ENCODE measurements at regions of chr15 and their contacts with region 1.

Region 1: GRCh38 chr15:85646538-85647091 is 148.1 kb downstream of the KLHL25 start:
- DNase-seq: no peak
- H3K4me3 ChIP-seq: no peak overlapping the region
- H3K27ac ChIP-seq: no peak overlapping the region
- H3K4me1 ChIP-seq: no peaks in the 10 kb centered on the region
- H3K27me3 ChIP-seq: no peaks in the 10 kb centered on the region
- CTCF ChIP-seq: no peak

Region 2: DNA sequence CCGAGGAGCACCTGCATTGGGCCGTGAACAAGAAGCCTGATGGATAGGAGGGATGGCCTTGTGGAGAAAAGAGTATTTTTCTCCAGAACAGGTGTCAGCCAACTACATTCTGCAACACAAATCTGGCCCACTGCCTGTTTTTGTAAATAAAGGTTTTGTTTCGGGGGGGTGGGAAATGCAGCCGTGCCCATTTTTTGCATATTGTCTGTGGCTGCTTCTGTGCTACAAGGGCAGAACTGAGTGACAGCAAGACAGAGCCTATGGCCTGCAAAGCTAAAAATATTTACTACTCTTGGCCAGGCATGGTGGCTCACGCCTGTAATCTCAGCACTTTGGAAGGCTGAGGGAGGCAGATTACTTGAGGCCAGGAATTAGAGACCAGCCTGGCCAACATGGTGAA is 362.1 kb before region 1 on chr15:
- CTCF ChIA-PET with region 1: no interaction called
- POLR2A ChIA-PET with region 1: interaction called, 21 read pairs
- intact Hi-C with region 1: no loop called
- DNase-seq: no peak
- H3K4me3 ChIP-seq: no peak overlapping the region
- H3K27ac ChIP-seq: no peak overlapping the region
- H3K4me1 ChIP-seq: no peaks in the 10 kb centered on the region
- H3K27me3 ChIP-seq: no peaks in the 10 kb centered on the region
- CTCF ChIP-seq: no peak

Region 3: DNA sequence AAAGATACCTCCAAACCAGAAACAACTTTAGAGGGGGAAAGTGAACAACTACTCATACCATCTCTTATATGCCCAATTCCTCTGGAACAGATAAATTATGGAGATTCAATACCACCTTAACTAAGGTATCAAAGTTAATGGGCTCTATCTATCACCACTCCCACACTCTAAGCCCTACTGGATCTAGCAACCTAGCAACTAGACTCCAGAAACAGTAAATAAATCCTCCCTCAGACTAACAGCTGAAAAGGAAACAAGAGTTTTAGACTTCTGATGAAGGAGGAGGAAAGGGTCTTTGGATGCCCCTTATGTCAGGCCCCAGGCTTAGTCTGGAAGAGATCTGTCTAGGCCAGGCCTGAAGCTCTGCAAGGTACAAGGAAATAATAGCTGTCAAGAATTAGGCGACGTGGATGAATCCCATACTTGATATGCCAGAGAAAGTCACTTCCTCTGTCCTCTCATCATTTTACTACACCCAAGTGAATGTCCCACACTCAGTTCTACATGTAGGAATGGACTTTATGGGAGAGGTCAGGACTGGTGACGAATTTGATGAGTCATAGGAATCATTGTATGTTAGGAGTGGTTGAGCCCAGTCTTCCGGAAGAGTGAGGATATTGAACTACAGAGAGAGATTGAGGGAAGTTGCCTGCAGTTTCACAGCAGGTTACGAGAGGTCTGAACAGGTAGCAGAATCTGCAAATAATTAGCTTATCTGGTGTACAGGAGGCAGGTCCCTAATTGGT is 152.4 kb before region 1 on chr15:
- CTCF ChIA-PET with region 1: no interaction called
- POLR2A ChIA-PET with region 1: no interaction called
- intact Hi-C with region 1: no loop called
- DNase-seq: peak; percentile 40 to 95
- H3K4me3 ChIP-seq: no peak overlapping the region
- H3K27ac ChIP-seq: peak overlapping the region; percentile 84
- H3K4me1 ChIP-seq: peaks cover 30% of the 10 kb centered on the region
- H3K27me3 ChIP-seq: no peaks in the 10 kb centered on the region
- CTCF ChIP-seq: no peak

Region 4: DNA sequence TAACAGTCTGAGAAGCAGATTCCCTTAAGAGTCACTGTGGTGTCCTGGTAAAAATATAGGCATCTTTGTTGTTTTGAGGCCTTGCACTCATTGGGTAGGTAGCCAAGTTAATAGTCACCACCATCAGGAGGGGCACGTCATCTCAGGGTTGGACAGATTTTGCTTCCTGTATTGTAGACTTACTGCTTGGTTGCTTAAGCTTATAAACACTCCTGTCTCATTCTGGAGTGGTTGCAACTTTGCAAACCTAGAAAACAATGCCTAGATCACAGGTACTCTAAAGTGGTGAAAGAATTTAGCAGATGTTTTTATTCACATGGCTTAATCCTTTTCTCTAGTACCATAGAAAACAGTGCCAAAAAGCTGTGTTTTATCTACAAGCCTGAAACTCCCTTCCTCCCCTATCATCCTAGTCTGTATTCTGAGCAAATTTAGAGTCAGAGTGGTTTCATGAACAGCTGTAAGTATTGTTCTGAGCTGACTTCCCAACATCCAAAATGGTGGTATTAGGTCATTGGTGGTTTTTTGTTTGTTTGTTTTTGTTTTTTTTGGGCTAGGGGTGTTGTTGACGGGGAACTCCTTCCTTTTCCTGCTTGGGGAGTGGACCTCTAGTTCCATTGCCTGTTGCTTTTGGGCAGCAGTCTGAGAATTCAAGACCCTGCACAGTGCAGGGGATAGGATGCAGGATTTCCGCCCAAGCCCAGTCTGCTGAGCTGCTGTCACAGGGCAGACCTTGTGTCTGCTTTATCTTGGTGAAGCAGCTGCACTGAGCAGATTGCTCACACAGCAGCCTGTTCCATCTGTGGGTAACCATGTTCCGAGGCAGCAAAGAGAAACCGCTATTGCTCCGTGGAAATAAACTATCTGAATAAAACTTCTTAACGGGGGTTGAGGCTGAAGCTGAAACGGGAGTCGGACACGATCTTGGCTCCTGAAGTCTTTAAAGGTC is 64.2 kb before region 1 on chr15:
- CTCF ChIA-PET with region 1: no interaction called
- POLR2A ChIA-PET with region 1: no interaction called
- intact Hi-C with region 1: no loop called
- DNase-seq: no peak
- H3K4me3 ChIP-seq: no peak overlapping the region
- H3K27ac ChIP-seq: peak overlapping the region; percentile 83
- H3K4me1 ChIP-seq: peaks cover 47% of the 10 kb centered on the region
- H3K27me3 ChIP-seq: no peaks in the 10 kb centered on the region
- CTCF ChIP-seq: no peak

Region 5: GRCh38 chr15:85618956-85619491 is 27.6 kb before region 1 on chr15:
- CTCF ChIA-PET with region 1: no interaction called
- POLR2A ChIA-PET with region 1: interaction called, 10 read pairs
- intact Hi-C with region 1: no loop called
- DNase-seq: peak in 1 of 2 experiments; percentile 44
- H3K4me3 ChIP-seq: no peak overlapping the region
- H3K27ac ChIP-seq: no peak overlapping the region
- H3K4me1 ChIP-seq: no peaks in the 10 kb centered on the region
- H3K27me3 ChIP-seq: no peaks in the 10 kb centered on the region
- CTCF ChIP-seq: no peak

Region 6: GRCh38 chr15:85667491-85668424 is 21.1 kb after region 1 on chr15:
- CTCF ChIA-PET with region 1: no interaction called
- POLR2A ChIA-PET with region 1: no interaction called
- intact Hi-C with region 1: no loop called
- DNase-seq: peak; percentile 28 to 90
- H3K4me3 ChIP-seq: no peak overlapping the region
- H3K27ac ChIP-seq: peak overlapping the region; percentile 55
- H3K4me1 ChIP-seq: peaks cover 8% of the 10 kb centered on the region; the same call in 1 of the 2 replicates
- H3K27me3 ChIP-seq: no peaks in the 10 kb centered on the region
- CTCF ChIP-seq: no peak

Measured in PC-9 (cell line).